ENCODE measurements at regions of chr6 and their contacts with region 1.

Region 1: DNA sequence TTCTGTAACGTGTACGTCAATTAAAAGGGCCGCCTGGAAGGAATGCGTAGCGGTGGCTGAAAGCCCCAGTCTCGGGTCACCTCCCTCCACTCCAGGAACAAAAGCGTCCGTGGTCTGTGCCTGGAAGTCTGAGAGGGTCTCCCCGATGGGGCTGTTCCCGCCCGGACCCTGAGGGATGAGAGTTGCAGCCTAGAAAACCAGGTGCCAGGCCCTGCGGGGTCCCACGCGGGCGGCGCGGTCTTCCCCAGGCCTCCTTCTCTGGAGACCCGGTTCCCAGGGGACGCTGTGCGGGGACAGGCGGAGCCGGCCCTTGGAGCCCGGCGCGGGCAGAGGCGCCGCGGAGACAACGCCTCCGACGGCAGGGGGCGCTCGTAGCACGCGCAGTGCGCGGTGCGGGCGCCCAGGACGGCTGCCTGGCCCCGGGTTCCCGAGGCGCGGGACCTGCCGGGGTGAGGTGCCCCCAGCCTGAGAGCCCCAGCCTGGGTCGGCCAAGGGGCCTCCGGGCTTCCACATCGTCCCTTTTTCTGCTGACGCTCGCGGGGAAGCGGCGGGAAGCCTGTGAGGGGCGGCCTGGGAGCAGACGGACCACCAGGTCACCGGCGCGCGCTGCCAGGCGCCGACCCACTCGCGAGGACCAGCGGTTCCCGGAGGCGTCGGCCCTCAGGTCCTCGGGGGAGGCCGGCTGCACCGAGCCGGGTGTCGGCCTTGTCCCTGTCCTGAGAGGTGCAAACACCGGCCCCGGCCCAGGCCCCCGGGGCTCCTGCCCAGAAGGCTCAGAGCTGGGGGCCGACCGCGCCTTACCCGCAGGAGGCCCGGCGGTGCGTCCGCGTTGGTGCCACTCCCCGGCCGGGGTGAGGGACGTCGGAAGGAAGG is 5.3 kb upstream of the FOXC1 start:
- DNase-seq: peak; percentile 82 to 95
- ATAC-seq: peak; percentile 89
- H3K4me3 ChIP-seq: peak overlapping the region; percentile 48 to 55
- H3K27ac ChIP-seq: peak overlapping the region; percentile 94 to 100
- H3K4me1 ChIP-seq: no peaks in the 10 kb centered on the region
- H3K27me3 ChIP-seq: no peaks in the 10 kb centered on the region

Region 2: DNA sequence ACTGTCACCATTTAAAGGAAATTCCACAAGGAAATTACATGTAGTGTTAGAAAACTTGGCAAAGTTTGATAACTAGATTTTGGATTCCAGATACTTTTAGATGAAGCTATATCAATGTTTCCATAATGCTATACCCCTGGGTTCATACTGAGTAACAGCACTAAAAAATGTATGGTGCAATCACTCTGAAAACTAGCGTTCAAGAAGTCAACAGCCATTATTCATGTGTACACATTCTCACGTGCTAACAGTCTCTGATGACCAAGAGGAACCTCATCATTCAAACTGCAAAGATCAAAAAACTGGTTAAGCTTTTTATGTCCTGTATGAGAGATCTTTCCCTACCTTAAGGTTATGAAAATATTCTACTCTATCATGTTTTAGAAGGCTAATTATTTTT is 443.5 kb after region 1 on chr6:
- intact Hi-C with region 1: no loop called
- DNase-seq: no peak
- ATAC-seq: no peak
- H3K4me3 ChIP-seq: no peak overlapping the region
- H3K27ac ChIP-seq: no peak overlapping the region
- H3K4me1 ChIP-seq: no peaks in the 10 kb centered on the region
- H3K27me3 ChIP-seq: no peaks in the 10 kb centered on the region

Region 3: GRCh38 chr6:2196079-2196679 is 591.8 kb after region 1 on chr6:
- intact Hi-C with region 1: loop called (anchors 5 kb)
- DNase-seq: no peak
- ATAC-seq: peak; percentile 80
- H3K4me3 ChIP-seq: no peak overlapping the region
- H3K27ac ChIP-seq: no peak overlapping the region
- H3K4me1 ChIP-seq: peaks cover 0 to 2% of the 10 kb centered on the region in 2 donors
- H3K27me3 ChIP-seq: no peaks in the 10 kb centered on the region

Region 4: GRCh38 chr6:2353412-2354137 is 749.2 kb after region 1 on chr6:
- intact Hi-C with region 1: loop called (anchors 2 kb)
- DNase-seq: peak; percentile 66 to 83
- ATAC-seq: peak; percentile 89
- H3K4me3 ChIP-seq: no peak overlapping the region
- H3K27ac ChIP-seq: peak overlapping the region; percentile 61 to 93
- H3K4me1 ChIP-seq: peaks cover 0 to 6% of the 10 kb centered on the region in 2 donors
- H3K27me3 ChIP-seq: no peaks in the 10 kb centered on the region

Region 5: DNA sequence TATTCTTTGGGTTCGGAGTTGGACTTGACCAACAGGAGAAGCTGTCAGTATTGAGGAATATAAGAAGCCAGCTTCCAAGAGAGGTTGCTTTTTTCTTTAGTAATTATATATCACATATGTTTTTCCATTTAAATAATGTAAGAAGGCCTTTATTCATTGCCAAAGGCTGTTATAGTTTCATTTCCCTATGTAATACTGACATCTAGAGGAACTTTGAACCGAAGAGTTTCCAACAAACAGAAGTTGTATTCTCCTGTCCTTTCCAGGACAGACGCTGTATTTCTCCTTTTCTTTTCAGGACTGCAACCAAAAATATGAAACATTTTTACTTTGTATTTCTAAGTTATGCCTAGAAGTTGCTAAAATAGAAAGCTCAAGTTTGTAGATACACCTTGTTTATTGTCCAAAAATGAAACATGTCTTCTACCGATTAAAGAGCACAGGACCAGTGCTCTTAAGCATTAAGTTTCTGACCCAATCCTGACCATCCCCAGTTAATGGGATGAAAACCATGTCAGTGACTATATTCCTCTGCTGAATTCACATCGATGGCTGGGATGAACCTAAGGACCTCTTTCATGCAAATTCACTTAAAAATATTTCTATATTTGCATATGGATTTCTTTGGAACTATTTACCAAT is 1091.2 kb after region 1 on chr6:
- intact Hi-C with region 1: loop called in 1 of 2 experiments (anchors 5 kb)
- DNase-seq: no peak
- ATAC-seq: no peak
- H3K4me3 ChIP-seq: no peak overlapping the region
- H3K27ac ChIP-seq: no peak overlapping the region
- H3K4me1 ChIP-seq: no peaks in the 10 kb centered on the region
- H3K27me3 ChIP-seq: no peaks in the 10 kb centered on the region